HEK293T (cell line): ENCODE measurements at regions of chr14 and their contacts with region 1.

Region 1: GRCh38 chr14:77376771-77377501 is at the starts of genes SAMD15 and TMED8:
- DNase-seq: peak; percentile 94

Region 2: GRCh38 chr14:77310026-77310425 is 66.9 kb before region 1 on chr14:
- CTCF ChIA-PET with region 1: no interaction called
- POLR2A ChIA-PET with region 1: no interaction called
- DNase-seq: no peak

Region 3: DNA sequence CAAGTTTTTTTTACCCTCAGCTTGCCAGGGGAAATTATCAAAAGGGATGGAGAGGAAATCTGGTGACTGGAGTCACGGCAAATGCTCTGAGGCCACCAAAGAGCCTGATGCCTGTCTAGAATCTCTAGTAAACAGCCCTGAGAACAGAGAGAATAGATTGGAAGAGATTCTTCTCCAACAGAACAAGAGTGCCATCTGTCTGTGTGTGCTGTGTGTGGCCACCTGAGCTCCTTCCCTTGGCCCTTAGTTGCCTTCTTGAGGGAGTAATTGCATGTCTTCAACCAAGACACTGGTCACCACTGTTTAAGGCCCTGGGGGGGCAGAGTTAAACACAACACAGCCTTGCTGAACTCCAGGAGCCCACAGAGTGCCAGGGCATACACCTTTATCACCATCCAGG is 50.8 kb before region 1 on chr14:
- CTCF ChIA-PET with region 1: no interaction called
- POLR2A ChIA-PET with region 1: interaction called, 23 read pairs
- DNase-seq: no peak

Region 4: DNA sequence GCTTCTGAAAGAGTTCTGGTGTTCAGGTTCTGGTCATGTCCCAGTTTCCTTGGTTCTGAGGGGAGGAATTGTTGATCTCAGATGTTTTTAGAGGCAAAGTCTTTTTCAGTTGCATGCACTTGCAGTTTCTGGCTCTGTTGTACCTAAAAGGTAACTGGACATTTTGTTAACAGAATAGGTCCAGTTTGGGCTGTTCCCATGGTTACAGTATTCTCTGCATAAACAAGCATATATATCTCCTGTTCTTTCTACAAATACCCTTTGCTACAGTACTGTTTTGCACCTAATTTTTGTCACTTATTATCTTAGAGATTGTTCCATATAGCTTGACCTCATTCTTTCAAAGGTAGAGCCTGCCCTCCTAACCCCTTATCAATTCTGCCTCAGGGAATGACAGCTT is 660.2 kb after region 1 on chr14:
- CTCF ChIA-PET with region 1: no interaction called
- POLR2A ChIA-PET with region 1: no interaction called
- DNase-seq: no peak